Activated CD4-positive, alpha-beta T cell treated with anti-CD3 and anti-CD28 coated beads, Interleukin-2, amount 10 ng/mL, durations not matched to agents 24 days and 14 days (primary cell): ENCODE measurements at regions of chr3 and their contacts with region 1.

Region 1: GRCh38 chr3:36876181-36876936 is 68.5 kb downstream of the TRANK1 start:
- DNase-seq: peak; percentile 83
- H3K4me3 Mint-ChIP-seq: peak overlapping the region; percentile 60
- H3K27ac Mint-ChIP-seq: peak overlapping the region; percentile 52
- H3K4me1 Mint-ChIP-seq: peaks cover 27% of the 10 kb centered on the region
- H3K27me3 Mint-ChIP-seq: peaks cover 2% of the 10 kb centered on the region

Region 2: GRCh38 chr3:36700537-36701248 is 175.7 kb before region 1 on chr3:
- intact Hi-C with region 1: no loop called
- DNase-seq: peak; percentile 77
- H3K4me3 Mint-ChIP-seq: no peak overlapping the region
- H3K27ac Mint-ChIP-seq: no peak overlapping the region
- H3K4me1 Mint-ChIP-seq: no peaks in the 10 kb centered on the region
- H3K27me3 Mint-ChIP-seq: peaks cover 2% of the 10 kb centered on the region

Region 3: GRCh38 chr3:36843065-36844051 is 33.0 kb before region 1 on chr3:
- intact Hi-C with region 1: loop called (anchors 2 kb)
- DNase-seq: peak; percentile 84
- H3K4me3 Mint-ChIP-seq: peak overlapping the region; percentile 36
- H3K27ac Mint-ChIP-seq: no peak overlapping the region
- H3K4me1 Mint-ChIP-seq: peaks cover 22% of the 10 kb centered on the region
- H3K27me3 Mint-ChIP-seq: no peaks in the 10 kb centered on the region

Region 4: GRCh38 chr3:36911990-36912804 is 35.8 kb after region 1 on chr3:
- intact Hi-C with region 1: loop called (anchors 1 kb)
- DNase-seq: peak; percentile 85
- H3K4me3 Mint-ChIP-seq: peak overlapping the region; percentile 66
- H3K27ac Mint-ChIP-seq: peak overlapping the region; percentile 71
- H3K4me1 Mint-ChIP-seq: peaks cover 38% of the 10 kb centered on the region
- H3K27me3 Mint-ChIP-seq: no peaks in the 10 kb centered on the region

Region 5: DNA sequence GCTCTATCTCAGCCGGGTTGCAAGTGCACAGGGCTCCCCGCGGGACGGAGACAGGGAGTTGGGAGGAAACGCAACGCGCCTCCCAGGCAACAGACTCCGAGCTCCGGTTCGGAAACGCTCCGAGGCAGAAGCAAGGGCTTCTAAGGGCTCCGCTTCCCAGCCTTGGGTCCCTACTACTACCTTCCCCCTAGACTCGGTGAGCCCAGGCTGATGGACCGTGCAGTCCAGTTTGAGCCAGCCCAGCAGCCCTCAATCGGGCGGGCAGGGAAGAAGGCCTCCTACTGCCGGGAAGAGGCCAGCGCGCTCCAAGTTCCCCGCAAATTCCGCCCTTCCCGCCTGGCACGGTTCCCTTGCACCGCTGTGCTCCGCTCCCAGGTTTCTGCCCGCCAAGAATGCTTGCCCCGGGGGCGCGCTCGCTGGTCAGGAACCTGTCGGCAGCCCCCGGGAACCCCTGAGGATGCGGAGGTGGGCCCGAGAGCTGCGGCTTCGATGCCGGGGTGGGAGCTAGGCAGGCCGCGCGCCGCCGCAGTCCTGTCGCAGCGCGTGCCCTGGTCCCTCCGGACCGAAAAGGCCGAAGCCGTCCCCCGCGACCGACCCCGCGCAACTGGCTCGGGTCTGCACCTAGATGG is 67.8 kb after region 1 on chr3:
- intact Hi-C with region 1: loop called (anchors 2 kb)
- DNase-seq: peak; percentile 75
- H3K4me3 Mint-ChIP-seq: peak overlapping the region; percentile 76
- H3K27ac Mint-ChIP-seq: no peak overlapping the region
- H3K4me1 Mint-ChIP-seq: peaks cover 12% of the 10 kb centered on the region
- H3K27me3 Mint-ChIP-seq: peaks cover 14% of the 10 kb centered on the region